ENCODE measurements at regions of chr17 and their contacts with region 1.

Region 1: DNA sequence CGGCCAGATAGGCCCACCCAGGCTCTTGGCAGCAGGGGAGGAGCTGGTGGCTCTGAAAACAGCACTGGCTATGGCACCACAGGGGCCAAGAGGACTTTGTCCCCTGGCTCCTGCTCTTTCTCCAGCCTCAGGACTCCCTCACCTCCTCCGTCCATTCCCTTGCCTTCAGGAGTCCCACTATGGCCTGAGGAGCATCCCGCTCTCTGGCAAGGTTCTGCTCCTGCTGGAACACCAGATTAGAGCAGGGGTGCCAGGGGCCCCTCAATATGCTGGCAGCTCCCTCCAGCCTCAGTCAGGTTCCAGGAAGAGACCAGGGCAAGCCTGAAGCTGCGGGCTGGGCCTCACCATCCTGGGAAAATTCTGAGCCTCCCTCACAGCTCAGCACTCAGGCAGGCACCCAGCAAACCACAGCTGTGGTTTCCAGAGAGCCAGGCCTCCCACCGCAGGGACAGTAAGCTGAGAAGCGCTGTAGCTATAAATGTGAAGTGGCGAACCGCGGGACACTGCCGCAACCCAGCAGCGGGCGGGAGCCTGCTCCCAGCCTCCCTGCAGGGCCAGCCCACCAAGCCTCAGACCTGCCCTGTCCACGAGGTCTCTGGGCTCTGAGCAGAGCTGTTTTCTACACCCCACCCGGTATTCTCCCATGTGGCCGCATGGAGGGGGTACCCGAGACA is 25.7 kb downstream of the C17orf100 start:
- DNase-seq: peak; percentile 10
- H3K4me3 ChIP-seq: no peak overlapping the region
- CTCF ChIP-seq: no peak

Region 2: DNA sequence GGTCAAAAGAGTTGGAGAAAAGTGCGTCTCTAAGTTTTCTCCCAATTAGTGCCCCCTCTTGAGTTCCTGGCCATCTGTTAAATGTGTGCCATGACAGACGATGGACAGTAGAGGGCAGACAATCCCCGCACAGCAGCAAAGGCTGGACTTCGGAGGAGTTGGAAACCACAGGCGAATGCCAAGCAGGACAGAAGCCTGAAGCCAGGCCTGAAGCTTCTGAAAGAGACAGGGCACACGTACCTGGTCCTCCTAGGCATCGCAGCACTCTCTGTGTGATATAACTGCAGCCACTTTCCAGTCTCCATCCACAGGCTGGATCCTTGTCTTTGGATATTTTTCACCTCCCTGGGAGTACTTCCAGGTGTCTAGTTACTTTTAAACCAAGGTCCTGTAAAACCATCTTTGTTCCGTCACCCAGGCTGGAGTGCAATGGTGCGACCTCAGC is 11.2 kb before region 1 on chr17:
- CTCF ChIA-PET with region 1: interaction called, 26 read pairs
- POLR2A ChIA-PET with region 1: interaction called, 3 read pairs
- DNase-seq: no peak
- H3K4me3 ChIP-seq: no peak overlapping the region
- CTCF ChIP-seq: peak; percentile 92

Measured in AG04449 (cell line).